Right ventricle myocardium inferior (tissue), 1 donor: ENCODE measurements at regions of chr3 and their contacts with region 1.

Region 1: GRCh38 chr3:160413613-160414248 is 14.3 kb downstream of the SMC4 start:
- DNase-seq: no peak
- ATAC-seq: peak; percentile 42

Region 2: DNA sequence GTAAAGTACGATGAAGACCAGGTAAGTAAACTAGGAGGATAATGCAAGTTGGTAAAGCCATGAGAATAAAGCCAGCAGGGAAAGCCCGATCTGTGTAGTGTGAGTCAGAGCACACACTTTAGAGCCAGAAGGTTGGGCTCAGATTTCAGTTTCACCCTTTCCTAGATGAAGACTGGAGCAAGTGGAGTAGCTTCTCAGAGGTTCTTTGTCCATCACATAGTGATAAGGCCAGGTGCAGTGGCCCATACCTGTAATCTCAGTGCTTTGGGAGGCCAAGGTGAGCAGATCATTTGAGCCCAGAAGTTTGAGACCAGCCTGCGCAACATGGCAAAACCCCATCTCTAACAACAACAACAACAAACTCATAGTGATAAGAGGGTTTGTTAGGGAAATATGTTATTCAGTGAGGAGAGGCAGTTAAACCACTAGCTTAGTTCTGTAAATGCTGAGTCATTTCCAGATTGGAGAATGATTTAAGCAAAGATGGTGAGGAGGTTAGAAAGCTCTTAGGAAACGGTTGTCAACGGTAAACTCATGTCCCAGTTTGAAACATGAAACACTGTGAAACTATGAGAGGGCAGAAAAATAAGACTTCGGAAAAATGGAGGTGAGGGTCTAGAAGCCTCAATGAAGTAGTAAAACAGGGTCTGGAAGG is 386.1 kb before region 1 on chr3:
- intact Hi-C with region 1: loop called (anchors 2 kb)
- DNase-seq: no peak
- ATAC-seq: no peak

Region 3: GRCh38 chr3:160163229-160163878 is 250.4 kb before region 1 on chr3:
- intact Hi-C with region 1: loop called (anchors 5 kb)
- DNase-seq: no peak
- ATAC-seq: no peak

Region 4: GRCh38 chr3:160653512-160653911 is 239.8 kb after region 1 on chr3:
- intact Hi-C with region 1: no loop called
- DNase-seq: no peak
- ATAC-seq: no peak